ENCODE measurements at regions of chr1 and their contacts with region 1.

Region 1: GRCh38 chr1:59759156-59759925 is 55.4 kb upstream of the HOOK1 start:
- DNase-seq: peak; percentile 79 to 89 (median 80)
- ATAC-seq: peak; percentile 83 to 96 (median 94)
- H3K4me3 ChIP-seq: peak overlapping the region in 9 of 12 donors; percentile 22 to 46 (median 37)
- H3K27ac ChIP-seq: peak overlapping the region in 9 of 12 donors; percentile 14 to 79 (median 53)
- H3K4me1 ChIP-seq: peaks cover 0 to 14% (median 5%) of the 10 kb centered on the region in 12 donors
- H3K27me3 ChIP-seq: no peaks in the 10 kb centered on the region
- CTCF ChIP-seq: peak; percentile 91 to 99 (median 94)
- POLR2A ChIP-seq: no peak

Region 2: GRCh38 chr1:58515794-58516401 is 1243.4 kb before region 1 on chr1:
- intact Hi-C with region 1: loop called in 1 of 10 experiments (anchors 10 kb)
- DNase-seq: peak in 4 of 5 donors; percentile 20 to 35 (median 30)
- ATAC-seq: peak in 2 of 4 donors; percentile 39 to 72
- H3K4me3 ChIP-seq: no peak overlapping the region
- H3K27ac ChIP-seq: no peak overlapping the region
- H3K4me1 ChIP-seq: peaks cover 0 to 14% (median 0%) of the 10 kb centered on the region in 12 donors
- H3K27me3 ChIP-seq: no peaks in the 10 kb centered on the region
- CTCF ChIP-seq: peak; percentile 56 to 82 (median 72)
- POLR2A ChIP-seq: no peak

Region 3: GRCh38 chr1:58739856-58740466 is 1019.4 kb before region 1 on chr1:
- intact Hi-C with region 1: loop called (anchors 1 to 5 kb)
- DNase-seq: peak in 1 of 5 donors; percentile 20
- ATAC-seq: peak in 1 of 4 donors; percentile 43
- H3K4me3 ChIP-seq: no peak overlapping the region
- H3K27ac ChIP-seq: no peak overlapping the region
- H3K4me1 ChIP-seq: peaks cover 0 to 21% (median 0%) of the 10 kb centered on the region in 12 donors
- H3K27me3 ChIP-seq: no peaks in the 10 kb centered on the region
- CTCF ChIP-seq: peak; percentile 72 to 92 (median 88)
- POLR2A ChIP-seq: no peak

Region 4: DNA sequence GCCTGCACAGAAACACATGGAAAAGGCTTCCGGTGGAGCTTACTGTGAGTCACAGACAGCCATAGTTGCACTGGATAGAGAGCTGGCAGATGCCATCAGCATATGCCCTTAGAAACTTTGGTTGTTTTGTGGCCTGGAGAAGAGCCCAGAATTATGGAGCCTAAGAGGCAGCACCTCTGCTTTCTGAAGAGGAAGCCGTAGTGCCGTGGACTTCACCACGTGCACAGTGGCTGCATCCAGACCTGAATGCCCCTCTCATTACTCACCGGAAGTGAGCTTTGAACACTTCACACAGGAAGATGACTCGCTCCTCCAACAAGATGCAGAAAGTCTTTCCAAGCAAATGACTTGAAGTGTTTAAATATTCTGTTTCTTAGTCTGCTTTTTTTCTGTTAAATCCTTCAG is 1003.9 kb before region 1 on chr1:
- intact Hi-C with region 1: loop called in 1 of 10 experiments (anchors 5 kb)
- DNase-seq: peak; percentile 45 to 79 (median 62)
- ATAC-seq: peak; percentile 69 to 95 (median 94)
- H3K4me3 ChIP-seq: peak overlapping the region in 2 of 12 donors; percentile 24 to 25
- H3K27ac ChIP-seq: peak overlapping the region in 11 of 12 donors; percentile 41 to 80 (median 71)
- H3K4me1 ChIP-seq: peaks cover 0 to 31% (median 11%) of the 10 kb centered on the region in 12 donors
- H3K27me3 ChIP-seq: no peaks in the 10 kb centered on the region
- CTCF ChIP-seq: no peak
- POLR2A ChIP-seq: no peak

Region 5: GRCh38 chr1:58768971-58769808 is 990.2 kb before region 1 on chr1:
- intact Hi-C with region 1: loop called in 1 of 10 experiments (anchors 10 kb)
- DNase-seq: peak; percentile 72 to 86 (median 74)
- ATAC-seq: peak in 2 of 4 donors; percentile 10 to 51
- H3K4me3 ChIP-seq: no peak overlapping the region
- H3K27ac ChIP-seq: no peak overlapping the region
- H3K4me1 ChIP-seq: peaks cover 3 to 26% (median 18%) of the 10 kb centered on the region in 12 donors
- H3K27me3 ChIP-seq: no peaks in the 10 kb centered on the region
- CTCF ChIP-seq: peak; percentile 75 to 92 (median 86)
- POLR2A ChIP-seq: no peak

Region 6: GRCh38 chr1:59057211-59057694 is 702.1 kb before region 1 on chr1:
- intact Hi-C with region 1: no loop called
- DNase-seq: peak; percentile 81 to 91 (median 84)
- ATAC-seq: peak; percentile 89 to 93 (median 91)
- H3K4me3 ChIP-seq: no peak overlapping the region
- H3K27ac ChIP-seq: peak overlapping the region; percentile 35 to 77 (median 58)
- H3K4me1 ChIP-seq: peaks cover 0 to 42% (median 26%) of the 10 kb centered on the region in 12 donors
- H3K27me3 ChIP-seq: no peaks in the 10 kb centered on the region
- CTCF ChIP-seq: peak in 3 of 12 donors; percentile 12 to 37 (median 22)
- POLR2A ChIP-seq: peak in 1 of 2 donors; percentile 57

Region 7: GRCh38 chr1:59707178-59707791 is 52.1 kb before region 1 on chr1:
- intact Hi-C with region 1: loop called in 8 of 10 experiments (anchors 2 to 5 kb)
- DNase-seq: peak in 4 of 5 donors; percentile 34 to 76 (median 62)
- ATAC-seq: peak; percentile 53 to 92 (median 86)
- H3K4me3 ChIP-seq: no peak overlapping the region
- H3K27ac ChIP-seq: peak overlapping the region in 11 of 12 donors; percentile 17 to 72 (median 53)
- H3K4me1 ChIP-seq: peaks cover 0 to 60% (median 36%) of the 10 kb centered on the region in 12 donors
- H3K27me3 ChIP-seq: no peaks in the 10 kb centered on the region
- CTCF ChIP-seq: no peak
- POLR2A ChIP-seq: no peak

Region 8: GRCh38 chr1:59718064-59718988 is 41.0 kb before region 1 on chr1:
- intact Hi-C with region 1: loop called in 1 of 10 experiments (anchors 5 kb)
- DNase-seq: no peak
- ATAC-seq: peak; percentile 49 to 90 (median 74)
- H3K4me3 ChIP-seq: no peak overlapping the region
- H3K27ac ChIP-seq: peak overlapping the region in 11 of 12 donors; percentile 0 to 81 (median 42)
- H3K4me1 ChIP-seq: peaks cover 0 to 32% (median 4%) of the 10 kb centered on the region in 12 donors
- H3K27me3 ChIP-seq: no peaks in the 10 kb centered on the region
- CTCF ChIP-seq: peak in 7 of 12 donors; percentile 25 to 46 (median 38)
- POLR2A ChIP-seq: no peak

Measured in heart left ventricle (tissue), 16 donors.